HepG2 (cell line): ENCODE measurements at regions of chr10 and their contacts with region 1.

Region 1: DNA sequence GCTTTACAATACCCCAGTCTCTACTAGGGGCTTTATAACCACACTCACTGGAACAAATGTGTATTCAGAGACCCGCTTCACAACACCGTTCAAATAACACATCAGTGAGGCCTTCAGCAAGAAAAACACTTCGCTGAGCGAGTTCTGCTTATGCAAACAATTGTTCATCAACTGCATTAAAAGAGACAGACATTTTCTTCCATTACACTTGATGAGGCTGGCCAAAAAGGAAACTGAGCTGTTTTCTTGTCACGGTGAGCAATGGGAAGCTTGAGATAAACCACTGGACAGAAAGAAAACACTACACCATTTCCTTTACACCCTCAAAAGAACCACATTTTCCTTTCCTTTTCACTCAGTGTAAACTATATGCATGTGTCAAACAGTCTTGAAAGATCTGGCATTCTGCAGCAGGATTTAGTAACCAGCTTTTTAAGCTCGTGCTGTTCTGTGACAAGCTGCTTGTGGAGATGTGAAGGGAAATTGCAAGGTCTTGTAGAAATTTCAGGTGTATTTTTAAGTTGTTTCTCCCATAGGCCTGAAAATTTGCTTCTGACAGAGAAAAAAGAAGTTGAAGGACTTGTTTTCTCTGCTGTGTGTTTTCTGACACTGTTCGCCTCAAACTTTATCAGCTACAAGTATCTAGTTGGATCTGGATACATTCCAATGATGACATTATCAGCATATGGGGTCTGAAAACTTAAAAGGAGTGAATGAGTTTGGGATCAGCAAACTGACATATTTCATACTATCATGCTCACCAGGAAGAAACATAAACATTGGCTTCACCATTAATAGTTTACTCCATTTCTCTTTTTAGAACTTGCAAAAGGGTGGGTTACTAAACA is 693.1 kb downstream of the PARD3 start:
- DNase-seq: peak; percentile 71
- ATAC-seq: peak; percentile 73
- H3K4me3 ChIP-seq: peak overlapping the region; percentile 3 to 44 (median 24); a peak in 2 of 6 replicates
- H3K27ac ChIP-seq: peak overlapping the region; percentile 90
- H3K4me1 ChIP-seq: peaks cover 68% of the 10 kb centered on the region
- H3K27me3 ChIP-seq: no peaks in the 10 kb centered on the region
- CTCF ChIP-seq: no peak
- EP300 ChIP-seq: no peak
- POLR2A ChIP-seq: no peak
- RAD21 ChIP-seq: no peak

Region 2: GRCh38 chr10:34235164-34235832 is 113.3 kb after region 1 on chr10:
- CTCF ChIA-PET with region 1: no interaction called
- POLR2A ChIA-PET with region 1: no interaction called
- in situ Hi-C with region 1: no loop called
- intact Hi-C with region 1: loop called (anchors 1 kb)
- DNase-seq: no peak
- ATAC-seq: no peak
- H3K4me3 ChIP-seq: no peak overlapping the region
- H3K27ac ChIP-seq: no peak overlapping the region
- H3K4me1 ChIP-seq: peaks cover 42% of the 10 kb centered on the region
- H3K27me3 ChIP-seq: no peaks in the 10 kb centered on the region
- CTCF ChIP-seq: no peak
- EP300 ChIP-seq: no peak
- POLR2A ChIP-seq: no peak
- RAD21 ChIP-seq: no peak